PC-3 (cell line): ENCODE measurements at regions of chr1 and their contacts with region 1.

Region 1: DNA sequence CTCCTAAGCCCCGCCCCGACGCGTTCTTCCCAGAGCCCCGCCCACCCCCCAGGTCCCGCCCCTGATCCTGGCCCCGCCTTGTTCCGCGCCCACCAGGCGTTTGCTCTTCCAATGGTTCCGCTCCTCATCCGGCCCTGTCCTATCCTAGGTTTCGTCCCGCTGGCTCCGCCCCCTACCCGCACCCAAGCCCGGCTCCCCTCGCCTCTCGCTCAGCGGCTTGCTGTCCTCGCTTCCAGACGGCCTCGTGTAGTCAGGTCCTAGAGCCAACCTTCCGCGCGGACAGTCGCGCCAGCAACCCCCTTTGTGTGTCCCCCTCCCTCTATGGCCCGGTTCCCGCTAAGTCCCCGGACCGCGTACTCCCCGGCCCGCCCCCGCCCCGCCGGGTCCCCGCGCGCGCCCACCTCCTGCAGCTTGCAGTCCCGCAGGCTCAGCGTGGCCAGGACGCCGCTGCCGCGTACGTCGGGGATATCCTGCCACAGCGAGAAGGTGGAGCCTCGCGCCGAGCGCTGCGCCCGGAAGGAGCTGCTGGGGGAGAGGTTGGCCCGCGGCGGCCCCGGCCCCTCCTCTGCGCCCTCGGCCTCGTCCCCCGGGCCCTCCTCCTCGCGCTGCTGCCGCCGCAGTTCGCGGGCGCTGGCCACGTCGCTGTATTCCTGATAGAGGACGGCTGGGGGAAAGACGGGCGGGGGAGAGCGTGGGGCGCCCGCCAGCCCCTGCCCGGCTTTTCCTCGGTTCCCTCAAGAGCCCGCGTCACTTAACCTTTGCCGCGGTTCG is 5.7 kb downstream of the ARHGEF19 start:
- DNase-seq: peak; percentile 97
- ATAC-seq: peak; percentile 96
- H3K4me3 ChIP-seq: peak overlapping the region; percentile 71
- H3K27ac ChIP-seq: peak overlapping the region; percentile 82
- H3K4me1 ChIP-seq: peaks cover 12% of the 10 kb centered on the region
- H3K27me3 ChIP-seq: no peaks in the 10 kb centered on the region
- CTCF ChIP-seq: no peak

Region 2: GRCh38 chr1:16236511-16237342 is 30.0 kb after region 1 on chr1 and contains the start of gene CPLANE2:
- CTCF ChIA-PET with region 1: interaction called, 10 read pairs
- POLR2A ChIA-PET with region 1: no interaction called
- intact Hi-C with region 1: loop called (anchors 5 kb)
- DNase-seq: peak; percentile 95
- ATAC-seq: peak; percentile 79
- H3K4me3 ChIP-seq: peak within 1 kb of the TSS; percentile 72
- H3K27ac ChIP-seq: peak within 1 kb of the TSS; percentile 65
- H3K4me1 ChIP-seq: peaks cover 22% of the 10 kb centered on the region
- H3K27me3 ChIP-seq: no peaks in the 10 kb centered on the region
- CTCF ChIP-seq: 0 out of 2 replicates have a peak, but pooled peaks have one; percentile 1
- total RNA-seq, gene CPLANE2: 9.6 and 11.6 TPM in 2 replicates

Region 3: GRCh38 chr1:16243936-16244649 is 37.4 kb after region 1 on chr1:
- CTCF ChIA-PET with region 1: no interaction called
- POLR2A ChIA-PET with region 1: no interaction called
- intact Hi-C with region 1: loop called (anchors 5 kb)
- DNase-seq: peak; percentile 91
- ATAC-seq: peak; percentile 65
- H3K4me3 ChIP-seq: no peak overlapping the region
- H3K27ac ChIP-seq: no peak overlapping the region
- H3K4me1 ChIP-seq: peaks cover 17% of the 10 kb centered on the region
- H3K27me3 ChIP-seq: no peaks in the 10 kb centered on the region
- CTCF ChIP-seq: peak; percentile 90